A673 (cell line): ENCODE measurements at regions of chr16 and their contacts with region 1.

Region 1: DNA sequence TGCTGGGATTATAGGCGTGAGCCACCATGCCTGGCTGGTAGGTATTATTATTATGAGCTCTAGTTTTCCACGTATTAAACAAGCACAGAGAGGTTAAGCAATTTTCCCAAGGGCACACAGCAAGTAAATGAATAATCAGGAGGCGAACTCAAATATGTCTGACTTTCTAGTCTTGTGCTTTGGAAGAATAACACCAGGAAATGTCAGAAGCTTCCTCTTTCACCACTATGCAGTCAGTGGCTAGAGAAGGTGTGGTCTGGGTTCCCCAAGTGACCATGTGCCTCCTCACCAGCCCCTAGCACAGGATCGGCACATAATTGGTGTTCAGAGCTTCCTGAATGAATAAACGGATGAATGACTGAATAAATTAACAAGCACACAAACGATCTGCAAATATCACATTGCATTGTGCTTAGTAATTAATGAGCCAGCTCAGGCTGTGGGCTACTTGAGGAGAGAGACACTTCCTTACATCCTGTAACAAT is 21.6 kb upstream of the SCNN1B start:
- DNase-seq: peak; percentile 28
- H3K4me3 ChIP-seq: no peak overlapping the region
- H3K27ac ChIP-seq: no peak overlapping the region
- H3K4me1 ChIP-seq: peaks cover 13% of the 10 kb centered on the region
- H3K27me3 ChIP-seq: no peaks in the 10 kb centered on the region
- CTCF ChIP-seq: no peak

Region 2: DNA sequence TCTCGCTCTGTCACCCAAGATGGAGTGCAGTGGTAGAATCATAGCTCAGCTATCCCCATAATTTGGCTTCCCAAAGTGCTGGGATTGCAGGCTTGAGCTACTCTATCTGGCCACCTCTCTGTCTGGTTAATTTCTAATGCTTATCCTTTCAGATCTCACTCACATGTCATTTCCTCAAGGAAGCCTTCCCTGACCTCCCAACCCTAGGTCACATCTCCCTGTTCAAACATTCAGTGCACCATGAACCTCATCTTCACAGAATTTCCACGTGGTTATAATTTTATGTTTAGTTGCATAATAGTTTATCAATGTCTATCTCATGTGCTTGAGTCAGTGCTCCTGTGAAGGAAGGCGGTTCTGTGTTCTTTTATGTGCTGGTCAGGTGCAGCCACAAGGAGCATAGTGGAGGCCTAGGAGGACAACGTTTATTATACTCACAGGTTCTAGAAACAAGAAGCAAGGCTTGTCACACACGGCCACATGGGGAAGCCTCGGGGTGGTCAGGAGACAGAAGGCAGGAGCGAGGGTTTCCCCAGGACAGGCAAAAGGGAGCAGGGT is 13.0 kb before region 1 on chr16:
- CTCF ChIA-PET with region 1: interaction called, 10 read pairs
- POLR2A ChIA-PET with region 1: no interaction called
- intact Hi-C with region 1: no loop called
- DNase-seq: no peak
- H3K4me3 ChIP-seq: no peak overlapping the region
- H3K27ac ChIP-seq: no peak overlapping the region
- H3K4me1 ChIP-seq: no peaks in the 10 kb centered on the region
- H3K27me3 ChIP-seq: no peaks in the 10 kb centered on the region
- CTCF ChIP-seq: no peak